ENCODE measurements at regions of chr2 and their contacts with region 1.

Region 1: GRCh38 chr2:3423492-3424175 is 44.1 kb downstream of the TRAPPC12 start:
- DNase-seq: no peak
- H3K4me3 ChIP-seq: no peak overlapping the region
- CTCF ChIP-seq: peak; percentile 95

Region 2: DNA sequence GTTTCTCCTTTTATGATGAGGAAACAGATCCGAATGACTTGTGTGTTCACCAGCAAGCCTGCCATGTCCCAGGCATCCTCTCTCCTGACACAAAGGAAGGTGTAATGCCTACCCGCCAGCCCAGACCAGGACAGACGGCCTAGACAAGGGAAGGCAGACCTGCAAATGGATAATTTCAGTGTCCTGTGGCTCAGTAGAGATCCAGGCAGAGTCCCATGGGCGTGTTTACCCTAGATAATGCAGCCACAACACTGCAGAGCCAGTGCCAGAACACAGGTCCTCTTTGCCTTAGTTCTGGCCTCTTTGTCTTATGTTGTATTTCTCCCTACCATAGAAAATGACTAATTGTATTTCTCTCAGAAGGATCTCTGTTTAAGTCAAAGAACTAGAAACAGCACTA is 31.4 kb before region 1 on chr2:
- CTCF ChIA-PET with region 1: interaction called, 94 read pairs
- POLR2A ChIA-PET with region 1: no interaction called
- DNase-seq: no peak
- H3K4me3 ChIP-seq: no peak overlapping the region
- CTCF ChIP-seq: no peak

Region 3: GRCh38 chr2:3443506-3444073 is 20.0 kb after region 1 on chr2:
- CTCF ChIA-PET with region 1: interaction called, 89 read pairs
- POLR2A ChIA-PET with region 1: no interaction called
- DNase-seq: no peak
- H3K4me3 ChIP-seq: no peak overlapping the region
- CTCF ChIP-seq: no peak

Region 4: GRCh38 chr2:3461801-3462492 is 38.3 kb after region 1 on chr2:
- CTCF ChIA-PET with region 1: interaction called, 26 read pairs
- POLR2A ChIA-PET with region 1: no interaction called
- DNase-seq: no peak
- H3K4me3 ChIP-seq: no peak overlapping the region
- CTCF ChIP-seq: peak; percentile 67

Region 5: GRCh38 chr2:3651691-3652648 is 228.3 kb after region 1 on chr2:
- CTCF ChIA-PET with region 1: interaction called, 96 read pairs
- POLR2A ChIA-PET with region 1: no interaction called
- DNase-seq: no peak
- H3K4me3 ChIP-seq: no peak overlapping the region; the same call in 1 of the 2 replicates
- CTCF ChIP-seq: no peak

Region 6: GRCh38 chr2:3778851-3779495 is 355.3 kb after region 1 on chr2:
- CTCF ChIA-PET with region 1: no interaction called
- POLR2A ChIA-PET with region 1: no interaction called
- DNase-seq: no peak
- H3K4me3 ChIP-seq: no peak overlapping the region
- CTCF ChIP-seq: no peak

Measured in AG04449 (cell line).